Posterior cingulate gyrus (tissue), 11 donors: ENCODE measurements at regions of chr7 and their contacts with region 1.

Region 1: DNA sequence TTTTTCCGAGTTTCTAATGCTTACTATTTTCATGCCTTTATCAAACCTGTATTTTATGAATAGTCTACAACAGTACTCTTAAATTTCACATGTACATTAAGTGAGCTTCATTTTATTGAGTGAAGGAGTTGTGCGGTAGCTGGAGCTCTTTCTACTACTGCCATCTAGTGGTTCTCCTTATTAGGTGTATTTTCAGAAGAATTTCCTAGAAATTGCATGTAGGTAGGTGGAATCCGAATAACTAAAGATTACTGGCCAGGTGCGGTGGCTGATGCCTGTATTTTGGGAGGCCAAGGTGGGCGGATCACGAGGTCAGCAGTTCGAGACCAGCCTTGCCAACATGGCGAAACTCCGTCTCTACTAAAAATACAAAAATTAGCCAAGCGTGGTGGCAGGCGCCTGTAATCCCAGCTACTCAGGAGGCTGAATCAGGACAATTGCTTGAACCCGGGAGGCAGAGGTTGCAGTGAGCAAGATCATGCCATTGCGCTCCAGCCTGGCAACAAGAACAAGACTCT is 38.3 kb downstream of the LRRC72 start:
- DNase-seq: no peak

Region 2: GRCh38 chr7:16078076-16078952 is 486.7 kb before region 1 on chr7:
- intact Hi-C with region 1: loop called (anchors 1 kb)
- DNase-seq: peak in 1 of 10 donors; percentile 10

Region 3: GRCh38 chr7:16204953-16205352 is 360.0 kb before region 1 on chr7:
- intact Hi-C with region 1: no loop called
- DNase-seq: no peak

Region 4: GRCh38 chr7:16431646-16432424 is 133.1 kb before region 1 on chr7:
- intact Hi-C with region 1: loop called (anchors 2 kb)
- DNase-seq: peak in 1 of 10 donors; percentile 45

Region 5: GRCh38 chr7:16532272-16532671 is 32.7 kb before region 1 on chr7:
- intact Hi-C with region 1: no loop called
- DNase-seq: no peak

Region 6: DNA sequence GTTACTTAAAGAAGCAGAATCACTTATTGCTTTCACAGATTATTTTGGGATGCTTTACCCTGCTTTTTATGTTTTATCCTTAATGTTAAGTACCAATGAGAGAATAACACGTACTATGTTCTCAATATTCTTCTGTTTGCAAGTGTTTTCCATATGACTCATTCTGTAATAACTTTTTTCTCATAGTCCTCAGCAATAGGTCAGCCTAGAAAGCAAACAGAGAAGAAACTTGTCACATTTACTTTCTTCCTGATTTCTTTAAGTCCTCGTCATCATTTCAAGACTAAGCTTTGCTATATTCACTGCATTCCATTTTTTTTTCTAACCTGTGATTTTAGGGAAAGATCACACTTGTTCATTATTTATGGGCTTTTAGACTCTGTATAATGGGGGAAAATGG is 246.6 kb after region 1 on chr7:
- intact Hi-C with region 1: no loop called
- DNase-seq: no peak